ENCODE measurements at regions of chrX and their contacts with region 1.

Region 1: GRCh38 chrX:103533511-103534216 is 14.4 kb upstream of the RAB40A start:
- DNase-seq: peak; percentile 58 to 88
- H3K4me3 ChIP-seq: peak overlapping the region; percentile 20
- H3K4me1 ChIP-seq: no peaks in the 10 kb centered on the region
- H3K27me3 ChIP-seq: 0 out of 2 replicates have a peak, but pooled peaks cover 5% of the 10 kb centered on the region

Region 2: GRCh38 chrX:103663981-103664762 is 130.5 kb after region 1 on chrX:
- in situ Hi-C with region 1: no loop called
- DNase-seq: peak in 1 of 2 experiments; percentile 8
- H3K4me3 ChIP-seq: no peak overlapping the region
- H3K4me1 ChIP-seq: no peaks in the 10 kb centered on the region
- H3K27me3 ChIP-seq: peaks cover 16% of the 10 kb centered on the region

Region 3: GRCh38 chrX:103817502-103817901 is 283.8 kb after region 1 on chrX:
- in situ Hi-C with region 1: loop called (anchors 10 kb)
- DNase-seq: peak; percentile 57 to 59
- H3K4me3 ChIP-seq: no peak overlapping the region
- H3K4me1 ChIP-seq: no peaks in the 10 kb centered on the region
- H3K27me3 ChIP-seq: peaks cover 12% of the 10 kb centered on the region

Measured in HAP-1 (cell line).